IMR-90 (cell line): ENCODE measurements at regions of chr13 and their contacts with region 1.

Region 1: GRCh38 chr13:32228330-32229041 is 86.7 kb downstream of the ZAR1L start:
- DNase-seq: peak; percentile 84
- ATAC-seq: peak; percentile 12; the same call in 1 of the 2 replicates
- H3K4me3 ChIP-seq: no peak overlapping the region
- H3K27ac ChIP-seq: no peak overlapping the region
- H3K4me1 ChIP-seq: peaks cover 21% of the 10 kb centered on the region
- H3K27me3 ChIP-seq: no peaks in the 10 kb centered on the region
- CTCF ChIP-seq: 0 out of 2 replicates have a peak, but pooled peaks have one; percentile 6
- POLR2A ChIP-seq: no peak
- RAD21 ChIP-seq: peak; percentile 11; the same call in 1 of the 2 replicates

Region 2: GRCh38 chr13:31824705-31825517 is 403.6 kb before region 1 on chr13:
- CTCF ChIA-PET with region 1: no interaction called
- POLR2A ChIA-PET with region 1: no interaction called
- dilution Hi-C with region 1: no loop called
- in situ Hi-C with region 1: no loop called
- intact Hi-C with region 1: no loop called
- DNase-seq: peak; percentile 16
- ATAC-seq: peak; percentile 57; the same call in 1 of the 2 replicates
- H3K4me3 ChIP-seq: no peak overlapping the region
- H3K27ac ChIP-seq: no peak overlapping the region
- H3K4me1 ChIP-seq: no peaks in the 10 kb centered on the region
- H3K27me3 ChIP-seq: peaks cover 14% of the 10 kb centered on the region
- CTCF ChIP-seq: 0 out of 2 replicates have a peak, but pooled peaks have one; percentile 19
- POLR2A ChIP-seq: no peak
- RAD21 ChIP-seq: peak; percentile 18; the same call in 1 of the 2 replicates

Region 3: DNA sequence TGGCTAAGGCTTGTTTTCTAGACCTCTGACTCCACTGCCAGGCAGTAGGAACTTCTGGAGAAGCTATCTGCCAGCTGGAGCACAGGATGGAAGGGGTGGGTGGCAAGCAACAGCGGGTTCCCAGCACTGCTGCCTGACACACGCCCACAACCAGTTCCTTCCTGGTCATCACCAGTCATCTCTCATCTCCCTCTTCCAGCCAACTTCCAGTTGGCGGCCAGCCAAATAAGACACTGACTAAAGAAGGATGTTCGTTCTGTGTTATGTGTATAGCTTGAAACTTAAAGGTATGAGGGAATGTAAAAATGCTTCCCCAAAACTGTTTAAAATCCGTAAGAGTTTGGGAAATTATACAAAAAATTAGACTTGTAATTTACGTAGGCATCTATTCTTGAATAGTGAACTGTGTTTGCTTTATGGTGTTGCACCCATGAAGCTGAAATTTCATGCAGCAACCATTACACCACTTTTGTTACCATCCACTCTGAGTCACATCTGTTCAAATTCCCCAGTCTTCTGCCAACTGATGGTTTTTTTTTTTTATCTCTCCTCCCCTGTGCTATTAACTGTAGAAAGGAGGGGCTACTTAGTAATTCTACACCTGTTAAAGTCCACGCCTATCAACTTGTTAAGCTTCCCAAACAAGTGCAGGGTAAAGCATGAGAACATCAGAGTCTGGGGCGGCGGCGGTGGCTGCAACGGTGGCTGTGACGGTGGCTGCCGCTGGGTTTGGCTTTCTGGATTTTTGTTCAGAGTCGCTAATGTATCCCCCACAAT is 283.1 kb before region 1 on chr13:
- CTCF ChIA-PET with region 1: no interaction called
- POLR2A ChIA-PET with region 1: no interaction called
- dilution Hi-C with region 1: no loop called
- in situ Hi-C with region 1: no loop called
- intact Hi-C with region 1: loop called (anchors 5 kb)
- DNase-seq: peak; percentile 81
- ATAC-seq: peak; percentile 67
- H3K4me3 ChIP-seq: peak overlapping the region; percentile 7; the same call in 1 of the 2 replicates
- H3K27ac ChIP-seq: peak overlapping the region; percentile 75; the same call in 1 of the 2 replicates
- H3K4me1 ChIP-seq: peaks cover 20% of the 10 kb centered on the region
- H3K27me3 ChIP-seq: no peaks in the 10 kb centered on the region
- CTCF ChIP-seq: no peak
- POLR2A ChIP-seq: no peak
- RAD21 ChIP-seq: no peak

Region 4: GRCh38 chr13:32211813-32212212 is 16.7 kb before region 1 on chr13:
- CTCF ChIA-PET with region 1: no interaction called
- POLR2A ChIA-PET with region 1: interaction called, 10 read pairs
- dilution Hi-C with region 1: no loop called
- in situ Hi-C with region 1: no loop called
- intact Hi-C with region 1: no loop called
- DNase-seq: peak; percentile 95
- ATAC-seq: peak; percentile 84
- H3K4me3 ChIP-seq: no peak overlapping the region
- H3K27ac ChIP-seq: peak overlapping the region; percentile 82
- H3K4me1 ChIP-seq: peaks cover 25% of the 10 kb centered on the region
- H3K27me3 ChIP-seq: no peaks in the 10 kb centered on the region
- CTCF ChIP-seq: no peak
- POLR2A ChIP-seq: no peak
- RAD21 ChIP-seq: no peak